ENCODE measurements at regions of chr12 and their contacts with region 1.

Region 1: GRCh38 chr12:63150713-63151622 is at the start of gene AVPR1A:
- DNase-seq: no peak
- ATAC-seq: peak; percentile 46
- total RNA-seq, gene AVPR1A: 3.9 TPM

Region 2: DNA sequence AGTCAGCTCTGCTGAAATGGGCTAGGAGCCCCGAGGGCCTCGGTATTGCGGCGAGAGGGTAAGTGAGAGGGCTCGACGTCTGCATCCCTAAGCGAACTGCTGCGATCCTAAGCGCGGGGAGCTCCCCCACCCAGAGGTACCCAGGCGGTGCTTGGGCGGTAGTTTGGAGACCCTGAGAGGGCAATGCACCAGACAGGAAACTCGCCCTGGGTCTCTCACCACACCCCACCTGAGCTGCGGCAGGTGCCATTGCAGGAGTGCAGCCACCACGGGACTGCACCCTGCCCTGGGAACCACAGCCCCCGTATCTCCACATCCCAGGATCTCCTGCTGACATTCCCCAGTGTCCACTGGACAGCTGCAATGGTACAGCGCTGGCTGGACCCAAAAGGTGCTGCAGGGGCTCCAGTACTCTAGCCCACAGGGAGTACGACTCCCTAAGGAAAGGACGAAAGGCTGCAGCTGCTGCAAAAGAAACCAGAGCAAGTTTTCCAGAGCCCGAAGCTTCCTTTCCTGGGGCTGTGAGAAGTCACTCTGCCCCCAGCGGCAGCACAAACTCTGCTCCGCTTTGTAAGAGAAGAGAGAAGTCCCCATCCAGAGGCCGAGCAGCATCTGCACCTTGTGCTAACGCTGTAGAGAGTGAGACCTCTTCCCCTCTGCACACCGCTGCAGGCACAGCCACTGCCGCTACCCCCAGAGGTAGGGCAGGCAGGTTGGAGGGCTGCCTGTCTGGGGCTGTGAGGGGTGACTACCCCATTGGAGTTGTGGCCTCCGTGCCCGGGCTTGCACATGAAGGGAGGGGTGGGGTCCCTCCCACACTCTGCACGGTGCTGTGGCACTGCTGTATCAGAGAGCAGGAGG is 715.4 kb before region 1 on chr12:
- intact Hi-C with region 1: no loop called
- DNase-seq: peak; percentile 65
- ATAC-seq: peak; percentile 80

Region 3: DNA sequence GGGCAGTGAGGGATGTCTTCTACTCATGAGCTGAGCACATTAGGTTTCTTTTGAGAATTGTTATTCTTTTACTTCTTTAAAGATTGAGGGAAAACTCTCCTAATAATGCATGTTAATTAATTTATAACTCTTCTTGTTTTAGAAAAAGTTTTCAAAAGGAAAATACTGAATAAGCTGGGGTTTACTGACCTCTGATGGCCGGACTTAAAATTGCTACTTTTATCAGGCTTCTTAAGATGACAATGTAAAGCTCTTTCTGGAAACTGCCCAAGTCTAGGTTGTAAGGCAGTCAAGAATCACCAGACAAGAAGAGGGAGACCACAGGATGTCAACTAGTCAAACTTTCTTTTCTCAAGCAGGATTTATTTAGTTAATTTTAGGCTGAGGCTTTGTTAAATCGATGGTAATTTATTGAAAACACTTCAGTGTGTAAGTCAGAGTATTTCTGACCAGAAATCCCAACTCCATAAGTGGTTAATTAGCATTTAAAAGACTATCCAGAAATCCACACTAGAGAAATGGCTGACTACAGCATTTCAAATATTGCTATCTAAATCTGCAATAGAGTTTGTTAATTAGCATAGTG is 82.0 kb before region 1 on chr12:
- intact Hi-C with region 1: no loop called
- DNase-seq: no peak
- ATAC-seq: no peak

Region 4: DNA sequence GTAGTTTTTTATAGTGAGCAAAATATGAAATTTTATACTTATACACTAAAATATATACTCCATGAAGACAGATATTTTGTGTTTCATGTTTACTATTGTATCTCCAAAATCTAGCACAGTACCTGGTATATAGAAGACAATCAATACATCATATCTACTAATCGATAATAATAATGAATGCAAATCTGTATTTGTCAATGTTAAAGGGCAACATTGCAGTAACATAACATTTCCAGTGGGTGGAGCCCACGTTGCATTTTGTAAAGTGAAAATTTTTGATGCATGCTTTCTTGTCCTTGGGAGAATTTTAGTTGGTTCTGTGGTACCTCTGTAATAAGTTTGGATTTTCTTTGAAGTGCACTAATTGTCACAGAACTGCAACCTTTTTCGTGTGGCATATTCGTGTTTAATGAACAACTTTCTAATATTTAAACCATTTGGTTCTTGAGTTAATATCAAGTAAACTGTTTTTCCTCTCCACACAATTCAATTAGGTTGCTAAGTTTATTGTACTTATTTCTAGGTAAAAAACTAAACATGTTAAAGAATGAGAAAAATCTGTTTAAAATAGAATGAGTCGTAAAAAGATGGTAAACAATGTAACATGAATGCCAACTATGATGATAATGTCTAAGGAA is 47.4 kb before region 1 on chr12:
- intact Hi-C with region 1: loop called (anchors 1 kb)
- DNase-seq: no peak
- ATAC-seq: no peak

Region 5: DNA sequence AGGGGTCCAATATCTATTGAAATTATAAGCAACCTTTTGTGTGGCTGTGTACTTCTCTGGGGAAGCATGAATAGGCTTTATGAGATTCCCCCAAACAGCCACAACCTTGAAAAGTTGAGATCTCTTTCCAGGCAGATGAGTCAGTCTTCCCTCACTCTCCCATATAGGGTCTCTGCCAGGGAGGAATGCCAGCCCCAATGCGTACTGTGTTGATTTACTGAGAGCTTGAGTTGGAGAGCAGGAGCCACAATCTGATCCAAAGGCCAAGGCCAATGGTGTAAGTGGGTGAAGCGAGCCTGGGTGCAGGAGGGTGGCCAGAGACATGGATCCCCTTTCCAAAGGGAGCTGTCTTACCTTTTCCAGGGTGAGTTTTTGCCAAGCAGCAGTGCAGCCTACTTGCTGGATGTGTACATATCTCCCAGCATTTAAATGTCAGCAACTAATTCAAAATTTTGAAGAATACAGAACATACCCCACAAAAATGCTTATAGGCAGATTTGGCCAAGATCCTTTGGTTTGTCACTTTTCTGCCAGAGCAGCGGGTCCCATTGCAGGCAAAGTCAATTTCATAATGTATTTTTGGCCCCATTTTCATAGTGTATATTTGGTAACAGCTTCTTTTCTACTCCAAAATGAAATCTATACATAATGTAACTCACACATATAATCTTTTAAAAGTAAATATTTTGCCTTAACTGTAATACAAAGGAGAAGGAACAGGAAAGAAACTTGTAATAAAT is 1761.7 kb after region 1 on chr12:
- intact Hi-C with region 1: no loop called
- DNase-seq: no peak
- ATAC-seq: peak; percentile 15

Measured in sciatic nerve (tissue), 2 donors.